Esophagus muscularis mucosa (tissue), 4 donors: ENCODE measurements at regions of chr17 and their contacts with region 1.

Region 1: GRCh38 chr17:68260051-68260762 is 12.4 kb downstream of the AMZ2 start:
- DNase-seq: no peak
- H3K4me3 ChIP-seq: no peak overlapping the region
- H3K27ac ChIP-seq: no peak overlapping the region
- H3K4me1 ChIP-seq: peaks cover 3 to 20% (median 11%) of the 10 kb centered on the region in 4 donors
- H3K27me3 ChIP-seq: no peaks in the 10 kb centered on the region
- CTCF ChIP-seq: no peak
- EP300 ChIP-seq: no peak
- POLR2A ChIP-seq: no peak

Region 2: GRCh38 chr17:68103148-68103547 is 157.1 kb before region 1 on chr17:
- intact Hi-C with region 1: no loop called
- DNase-seq: no peak
- H3K4me3 ChIP-seq: peak overlapping the region; percentile 88 to 95 (median 92)
- H3K27ac ChIP-seq: peak overlapping the region in 2 of 4 donors; percentile 96 to 99
- H3K4me1 ChIP-seq: peaks cover 16 to 37% (median 32%) of the 10 kb centered on the region in 4 donors
- H3K27me3 ChIP-seq: no peaks in the 10 kb centered on the region
- CTCF ChIP-seq: no peak
- EP300 ChIP-seq: no peak
- POLR2A ChIP-seq: no peak

Region 3: DNA sequence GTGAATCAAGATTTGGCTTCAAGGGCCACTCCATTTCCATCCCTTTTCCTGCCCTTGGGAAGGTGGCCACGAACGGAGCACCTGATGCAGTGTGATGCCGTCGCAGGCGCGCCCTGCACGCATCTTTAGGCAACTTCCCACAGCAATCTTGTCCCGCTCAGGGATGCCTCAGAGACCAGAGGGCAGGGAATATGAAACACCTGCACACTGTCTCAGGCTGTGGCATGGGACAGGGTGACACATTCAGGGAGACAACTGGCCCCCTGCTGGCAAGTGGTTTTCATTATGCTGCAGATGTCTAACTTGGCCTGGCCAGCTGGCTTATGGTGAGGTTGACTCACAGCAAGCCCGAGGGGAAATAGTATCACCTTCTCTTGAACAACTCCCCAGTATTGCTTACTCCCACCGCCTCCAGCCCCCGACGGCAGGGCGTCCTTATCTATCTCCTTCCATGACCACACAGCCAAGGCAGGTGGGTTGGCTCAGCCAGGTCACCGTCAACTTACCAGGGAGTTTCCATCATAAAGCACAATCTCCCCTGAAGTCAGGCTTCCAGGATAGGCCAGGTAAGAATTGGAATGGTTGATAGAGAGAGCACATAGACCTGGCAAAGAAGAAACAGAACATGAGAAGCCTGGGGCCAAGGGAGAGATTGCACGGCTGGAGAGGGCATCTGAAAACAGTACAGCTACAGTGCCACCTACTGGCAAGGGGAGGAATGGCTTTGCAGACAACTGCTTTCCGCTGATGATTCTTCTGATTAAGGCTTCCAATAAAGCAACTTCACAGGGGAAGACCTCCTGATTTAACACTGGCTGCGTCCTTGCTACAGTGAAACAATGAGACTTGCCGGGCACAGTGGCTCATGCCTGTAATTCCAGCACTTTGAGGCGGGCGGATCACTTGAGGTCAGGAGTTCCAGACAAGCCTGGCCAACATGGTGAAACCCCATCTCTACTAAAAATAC is 176.0 kb after region 1 on chr17:
- intact Hi-C with region 1: loop called (anchors 10 kb)
- DNase-seq: peak; percentile 94
- H3K4me3 ChIP-seq: no peak overlapping the region
- H3K27ac ChIP-seq: no peak overlapping the region
- H3K4me1 ChIP-seq: peaks cover 30 to 36% (median 34%) of the 10 kb centered on the region in 4 donors
- H3K27me3 ChIP-seq: no peaks in the 10 kb centered on the region
- CTCF ChIP-seq: peak; percentile 85 to 95 (median 87)
- EP300 ChIP-seq: no peak
- POLR2A ChIP-seq: no peak